Activated CD8-positive, alpha-beta T cell treated with anti-CD3 and anti-CD28 coated beads for 36 hours (primary cell): ENCODE measurements at regions of chr1 and their contacts with region 1.

Region 1: GRCh38 chr1:110495926-110496600 is 22.9 kb downstream of the KCNA10 start:
- DNase-seq: peak; percentile 92
- ATAC-seq: peak; percentile 88
- H3K4me3 Mint-ChIP-seq: no peak overlapping the region
- H3K27ac Mint-ChIP-seq: no peak overlapping the region
- H3K4me1 Mint-ChIP-seq: no peaks in the 10 kb centered on the region
- H3K27me3 Mint-ChIP-seq: no peaks in the 10 kb centered on the region
- CTCF ChIP-seq: peak; percentile 89

Region 2: DNA sequence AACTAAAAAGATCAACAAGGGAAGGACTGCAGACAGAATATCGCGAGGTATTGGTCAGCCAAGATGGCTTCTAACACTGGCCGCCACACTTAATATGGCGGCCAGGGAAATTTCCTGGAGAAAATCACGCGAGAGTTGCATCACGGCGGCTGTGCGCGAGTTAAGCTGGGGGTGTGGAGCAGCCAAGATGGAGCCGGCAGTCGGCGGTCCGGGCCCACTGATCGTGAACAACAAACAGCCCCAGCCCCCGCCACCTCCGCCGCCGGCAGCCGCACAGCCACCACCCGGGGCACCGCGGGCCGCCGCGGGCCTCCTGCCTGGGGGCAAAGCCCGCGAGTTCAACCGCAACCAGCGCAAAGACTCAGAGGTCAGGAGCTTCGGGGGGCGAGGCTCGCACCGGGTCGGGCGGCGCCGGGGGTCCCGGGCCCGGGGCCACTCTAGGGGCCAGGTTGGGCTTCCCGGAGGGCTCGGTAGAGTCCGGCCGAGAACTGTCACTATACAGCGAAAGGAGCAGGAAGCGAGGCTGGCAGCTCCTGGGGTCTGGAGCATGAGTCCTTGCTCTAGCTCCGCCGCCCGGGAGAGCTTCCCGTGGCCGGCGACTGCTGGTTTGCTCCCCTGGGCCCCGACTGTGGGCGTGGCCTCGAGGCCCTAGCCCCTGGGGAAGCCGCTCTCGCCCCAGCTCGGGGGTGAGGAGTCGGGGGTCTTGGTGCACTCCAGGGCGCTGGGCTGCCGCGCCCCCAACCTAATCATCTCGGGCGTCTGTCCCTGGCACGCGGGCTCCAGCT is 461.4 kb before region 1 on chr1 and contains the start of gene STRIP1:
- CTCF ChIA-PET with region 1: interaction called, 10 read pairs
- POLR2A ChIA-PET with region 1: no interaction called
- intact Hi-C with region 1: no loop called
- DNase-seq: peak; percentile 95
- ATAC-seq: peak; percentile 94
- H3K4me3 Mint-ChIP-seq: peak within 1 kb of the TSS; percentile 92
- H3K27ac Mint-ChIP-seq: peak within 1 kb of the TSS; percentile 91
- H3K4me1 Mint-ChIP-seq: peaks cover 44% of the 10 kb centered on the region
- H3K27me3 Mint-ChIP-seq: no peaks in the 10 kb centered on the region
- CTCF ChIP-seq: no peak
- total RNA-seq, gene STRIP1: 24.6 to 24.8 TPM

Region 3: GRCh38 chr1:110225212-110225611 is 270.9 kb before region 1 on chr1:
- CTCF ChIA-PET with region 1: no interaction called
- POLR2A ChIA-PET with region 1: no interaction called
- intact Hi-C with region 1: no loop called
- DNase-seq: no peak
- ATAC-seq: no peak
- H3K4me3 Mint-ChIP-seq: no peak overlapping the region
- H3K27ac Mint-ChIP-seq: no peak overlapping the region
- H3K4me1 Mint-ChIP-seq: no peaks in the 10 kb centered on the region
- H3K27me3 Mint-ChIP-seq: no peaks in the 10 kb centered on the region
- CTCF ChIP-seq: no peak

Region 4: GRCh38 chr1:110312188-110313121 is 183.6 kb before region 1 on chr1:
- CTCF ChIA-PET with region 1: interaction called, 30 read pairs
- POLR2A ChIA-PET with region 1: no interaction called
- intact Hi-C with region 1: no loop called
- DNase-seq: peak; percentile 78
- ATAC-seq: peak; percentile 99
- H3K4me3 Mint-ChIP-seq: no peak overlapping the region
- H3K27ac Mint-ChIP-seq: no peak overlapping the region
- H3K4me1 Mint-ChIP-seq: no peaks in the 10 kb centered on the region
- H3K27me3 Mint-ChIP-seq: no peaks in the 10 kb centered on the region
- CTCF ChIP-seq: peak; percentile 88

Region 5: DNA sequence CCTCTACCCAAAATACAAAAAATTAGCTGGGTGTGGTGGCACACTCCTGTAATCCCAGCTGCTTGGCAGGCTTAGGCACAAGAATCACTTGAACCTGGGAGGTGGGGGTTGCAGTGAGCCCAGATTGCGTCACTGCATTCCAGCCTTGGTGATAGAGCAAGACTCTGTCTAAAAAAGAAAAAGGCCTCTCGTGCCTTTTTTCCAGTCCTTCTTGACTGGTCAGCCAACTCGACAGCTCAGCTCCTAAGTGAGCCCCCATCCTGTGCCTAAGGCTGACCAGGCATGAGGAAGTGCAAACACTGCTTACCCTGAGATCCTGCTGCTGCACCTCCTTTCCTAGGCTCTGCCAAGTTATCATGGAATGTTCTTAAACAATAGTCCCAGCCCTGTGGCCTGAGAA is 55.2 kb before region 1 on chr1:
- CTCF ChIA-PET with region 1: interaction called, 12 read pairs
- POLR2A ChIA-PET with region 1: no interaction called
- intact Hi-C with region 1: no loop called
- DNase-seq: no peak
- ATAC-seq: no peak
- H3K4me3 Mint-ChIP-seq: no peak overlapping the region
- H3K27ac Mint-ChIP-seq: no peak overlapping the region
- H3K4me1 Mint-ChIP-seq: no peaks in the 10 kb centered on the region
- H3K27me3 Mint-ChIP-seq: peaks cover 2% of the 10 kb centered on the region
- CTCF ChIP-seq: no peak

Region 6: GRCh38 chr1:110482662-110483307 is 13.3 kb before region 1 on chr1:
- CTCF ChIA-PET with region 1: interaction called, 24 read pairs
- POLR2A ChIA-PET with region 1: no interaction called
- intact Hi-C with region 1: no loop called
- DNase-seq: peak; percentile 4
- ATAC-seq: no peak
- H3K4me3 Mint-ChIP-seq: no peak overlapping the region
- H3K27ac Mint-ChIP-seq: no peak overlapping the region
- H3K4me1 Mint-ChIP-seq: no peaks in the 10 kb centered on the region
- H3K27me3 Mint-ChIP-seq: peaks cover 8% of the 10 kb centered on the region
- CTCF ChIP-seq: no peak

Region 7: GRCh38 chr1:110554871-110555801 is 59.1 kb after region 1 on chr1:
- CTCF ChIA-PET with region 1: interaction called, 11 read pairs
- POLR2A ChIA-PET with region 1: no interaction called
- intact Hi-C with region 1: no loop called
- DNase-seq: peak; percentile 65
- ATAC-seq: peak; percentile 92
- H3K4me3 Mint-ChIP-seq: peak overlapping the region; percentile 13
- H3K27ac Mint-ChIP-seq: no peak overlapping the region
- H3K4me1 Mint-ChIP-seq: no peaks in the 10 kb centered on the region
- H3K27me3 Mint-ChIP-seq: peaks cover 29% of the 10 kb centered on the region
- CTCF ChIP-seq: peak; percentile 83